CD4-positive, alpha-beta T cell (primary cell): ENCODE measurements at regions of chr5 and their contacts with region 1.

Region 1: DNA sequence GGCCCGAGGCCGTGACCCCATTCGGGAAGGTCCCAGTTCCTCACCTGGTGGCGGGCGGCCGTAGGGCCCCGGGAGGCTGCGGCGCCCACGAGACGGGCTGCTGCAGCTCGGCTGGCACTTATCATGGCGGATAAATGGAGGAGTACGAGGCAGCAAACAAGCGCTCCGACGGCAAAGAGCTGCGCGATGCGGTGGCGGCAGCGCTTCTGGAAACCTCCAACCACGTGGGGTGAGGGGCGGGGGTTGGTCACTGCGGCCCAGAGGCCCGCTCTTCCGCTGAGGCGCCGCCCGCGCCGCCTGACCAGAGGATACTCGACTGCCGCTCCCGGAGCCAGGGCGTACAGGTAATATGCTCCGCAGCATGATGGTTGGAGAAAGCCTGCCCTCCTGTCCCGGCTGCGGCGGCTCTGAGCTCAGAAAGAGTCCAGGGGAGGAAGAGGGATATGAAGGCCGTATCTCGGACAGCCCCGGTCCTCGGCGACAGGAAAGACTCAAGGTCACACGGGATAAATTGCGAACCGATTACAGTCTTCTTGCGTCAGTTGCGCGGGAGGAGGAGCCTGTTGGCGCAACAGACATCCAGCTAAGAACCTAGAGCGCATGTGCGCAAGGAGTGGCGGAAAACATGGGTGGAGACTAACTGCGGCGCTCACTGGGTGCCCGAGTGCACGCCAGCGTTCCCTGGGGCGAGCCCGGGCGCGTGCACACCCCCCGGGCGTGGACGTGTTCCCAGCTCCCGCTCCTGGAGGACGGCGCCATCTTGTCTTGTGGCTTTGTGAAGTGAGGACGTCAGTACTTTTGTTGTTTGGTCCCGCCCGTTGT is at the start of gene HSPA9:
- DNase-seq: peak; percentile 93 to 100 (median 96)
- ATAC-seq: peak; percentile 80
- H3K4me3 ChIP-seq: peak within 1 kb of the TSS; percentile 79
- H3K4me3 Mint-ChIP-seq: peak within 1 kb of the TSS; percentile 97
- H3K27ac ChIP-seq: peak within 1 kb of the TSS; percentile 98 to 99
- H3K27ac Mint-ChIP-seq: peak within 1 kb of the TSS; percentile 100
- H3K4me1 ChIP-seq: peaks cover 26% of the 10 kb centered on the region
- H3K4me1 Mint-ChIP-seq: peaks cover 50% of the 10 kb centered on the region
- H3K27me3 ChIP-seq: no peaks in the 10 kb centered on the region
- H3K27me3 Mint-ChIP-seq: no peaks in the 10 kb centered on the region
- CTCF ChIP-seq: no peak
- total RNA-seq, gene HSPA9: 354 to 366 TPM

Region 2: DNA sequence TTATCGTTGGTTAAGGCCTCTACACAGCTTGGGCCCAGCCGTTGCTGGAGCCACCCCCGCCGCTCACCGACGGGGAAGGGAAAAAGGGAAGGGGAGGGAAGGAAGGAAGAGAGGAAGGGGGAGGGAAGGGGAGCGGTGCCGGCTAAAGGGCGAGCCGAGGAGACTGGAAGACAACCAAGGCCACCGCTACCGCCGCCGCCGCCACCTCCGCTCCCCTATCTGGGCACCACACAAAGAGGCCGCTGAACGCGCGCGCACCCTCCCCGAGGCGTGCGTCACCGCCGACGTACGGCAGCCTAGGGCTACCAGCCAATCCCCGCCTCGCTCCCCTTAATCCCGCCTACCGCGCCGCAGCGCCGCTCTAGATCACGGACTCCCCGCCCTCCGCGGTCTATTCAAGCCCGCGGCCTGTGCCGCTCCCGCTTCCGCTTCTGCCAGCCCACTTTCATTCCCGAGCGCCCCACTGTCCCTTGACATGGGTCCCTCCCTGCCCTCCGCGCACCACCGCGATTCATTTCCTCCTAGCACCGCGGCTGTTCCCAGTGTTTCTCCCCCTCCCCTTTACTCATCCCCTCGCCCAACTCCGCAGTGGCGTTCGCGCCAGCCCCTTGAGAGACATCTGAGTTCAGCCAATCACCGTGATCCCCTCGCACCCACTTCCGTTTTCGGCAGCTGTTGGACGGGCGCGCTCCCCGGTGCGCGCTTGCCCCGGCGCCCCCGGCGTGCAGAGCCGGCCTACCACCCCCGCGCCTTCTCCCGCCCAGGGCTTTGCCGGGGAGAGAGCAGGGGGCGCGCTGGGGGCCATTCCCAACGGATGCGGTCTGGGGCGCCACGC is 821.1 kb before region 1 on chr5 and contains the start of gene HNRNPA0:
- CTCF ChIA-PET with region 1: no interaction called
- POLR2A ChIA-PET with region 1: interaction called, 8 read pairs
- intact Hi-C with region 1: loop called in 1 of 2 experiments (anchors 10 kb)
- DNase-seq: peak; percentile 95 to 99 (median 96)
- ATAC-seq: peak; percentile 81
- H3K4me3 ChIP-seq: peak within 1 kb of the TSS; percentile 97
- H3K4me3 Mint-ChIP-seq: peak within 1 kb of the TSS; percentile 97
- H3K27ac ChIP-seq: peak within 1 kb of the TSS; percentile 100
- H3K27ac Mint-ChIP-seq: peak within 1 kb of the TSS; percentile 100
- H3K4me1 ChIP-seq: peaks cover 28% of the 10 kb centered on the region
- H3K4me1 Mint-ChIP-seq: peaks cover 37% of the 10 kb centered on the region
- H3K27me3 ChIP-seq: no peaks in the 10 kb centered on the region
- H3K27me3 Mint-ChIP-seq: no peaks in the 10 kb centered on the region
- CTCF ChIP-seq: no peak
- total RNA-seq, gene HNRNPA0: 52.7 to 53.2 TPM

Region 3: DNA sequence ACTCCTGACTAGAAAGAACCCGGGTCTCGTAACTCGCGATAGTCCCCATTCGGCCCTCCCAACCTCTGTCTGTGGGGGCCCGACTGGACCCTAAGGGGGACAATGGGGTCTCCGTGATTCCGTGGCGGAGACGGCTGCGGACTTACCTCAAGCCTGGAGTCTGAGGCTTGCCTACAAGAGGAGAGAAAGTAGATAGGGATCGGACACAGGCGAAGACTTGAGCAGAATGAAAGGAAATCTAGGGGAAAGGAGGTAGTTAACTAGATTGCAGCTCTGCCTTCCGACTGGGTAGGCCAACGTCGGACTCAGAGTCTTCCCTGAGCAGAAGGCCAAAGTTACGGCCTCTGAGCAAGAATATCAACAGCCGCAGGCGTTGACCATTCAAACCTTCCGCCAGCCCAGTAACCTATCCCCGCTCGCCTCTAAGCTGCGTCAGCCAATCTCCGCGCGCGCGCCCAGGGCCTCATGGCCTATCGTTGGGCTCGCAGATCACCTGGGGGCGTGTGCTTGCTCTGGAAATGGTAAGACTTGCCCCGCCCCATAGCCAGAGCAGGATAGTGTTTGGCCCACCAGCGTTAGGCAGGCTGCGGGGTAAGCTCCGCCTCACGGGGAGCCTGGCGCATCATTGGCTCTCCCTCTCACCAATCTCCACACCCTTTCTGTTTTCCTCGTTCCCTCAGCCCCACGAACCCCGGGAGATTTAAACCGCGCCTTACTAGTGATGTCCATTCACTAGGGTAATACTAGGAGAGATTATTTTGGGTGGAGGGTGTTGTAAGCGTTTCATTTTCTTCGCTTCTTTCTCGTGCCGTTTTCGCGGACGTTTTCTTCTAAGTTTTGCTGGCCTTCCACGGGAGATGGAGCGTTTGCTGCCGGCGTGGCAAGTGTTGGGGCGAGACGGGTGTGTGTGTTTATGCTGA is 243.7 kb before region 1 on chr5 and contains the start of gene CDC25C:
- CTCF ChIA-PET with region 1: no interaction called
- POLR2A ChIA-PET with region 1: interaction called, 6 read pairs
- intact Hi-C with region 1: loop called in 1 of 2 experiments (anchors 10 kb)
- DNase-seq: peak; percentile 92 to 99 (median 95)
- ATAC-seq: peak; percentile 99
- H3K4me3 ChIP-seq: peak within 1 kb of the TSS; percentile 68
- H3K4me3 Mint-ChIP-seq: peak within 1 kb of the TSS; percentile 83
- H3K27ac ChIP-seq: no peak within 1 kb of the TSS
- H3K27ac Mint-ChIP-seq: peak within 1 kb of the TSS; percentile 40
- H3K4me1 ChIP-seq: peaks cover 13% of the 10 kb centered on the region
- H3K4me1 Mint-ChIP-seq: peaks cover 8% of the 10 kb centered on the region
- H3K27me3 ChIP-seq: no peaks in the 10 kb centered on the region
- H3K27me3 Mint-ChIP-seq: no peaks in the 10 kb centered on the region
- CTCF ChIP-seq: no peak
- total RNA-seq, gene CDC25C: not detected

Region 4: DNA sequence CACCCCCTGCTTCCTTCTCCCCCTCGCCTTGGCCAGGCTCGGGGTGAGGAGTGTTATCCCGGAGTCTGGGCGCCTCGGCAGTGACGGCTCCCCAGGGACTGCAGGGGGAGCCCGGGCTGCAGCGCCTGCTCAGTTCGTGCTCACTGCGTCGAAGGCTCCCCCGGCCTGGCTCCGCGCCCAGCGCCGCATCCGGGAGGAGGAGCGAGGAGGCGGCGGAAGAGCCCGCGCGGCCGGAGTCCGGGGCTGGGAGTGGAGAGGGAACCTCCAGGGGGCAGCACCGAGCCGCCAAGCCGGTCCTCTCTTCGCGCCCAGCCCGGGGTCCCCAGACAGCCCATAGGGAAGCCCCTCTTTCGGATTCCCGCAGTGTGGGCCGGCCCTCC is 111.4 kb before region 1 on chr5:
- CTCF ChIA-PET with region 1: interaction called, 5 read pairs
- POLR2A ChIA-PET with region 1: interaction called, 24 read pairs
- intact Hi-C with region 1: loop called in 1 of 2 experiments (anchors 10 kb)
- DNase-seq: peak; percentile 85 to 98 (median 93)
- ATAC-seq: peak; percentile 51
- H3K4me3 ChIP-seq: peak overlapping the region; percentile 60
- H3K4me3 Mint-ChIP-seq: peak overlapping the region; percentile 96
- H3K27ac ChIP-seq: peak overlapping the region; percentile 89 to 94
- H3K27ac Mint-ChIP-seq: peak overlapping the region; percentile 93
- H3K4me1 ChIP-seq: peaks cover 60% of the 10 kb centered on the region
- H3K4me1 Mint-ChIP-seq: peaks cover 50% of the 10 kb centered on the region
- H3K27me3 ChIP-seq: no peaks in the 10 kb centered on the region
- H3K27me3 Mint-ChIP-seq: no peaks in the 10 kb centered on the region
- CTCF ChIP-seq: peak; percentile 85

Region 5: GRCh38 chr5:138523406-138523970 is 51.9 kb before region 1 on chr5:
- CTCF ChIA-PET with region 1: no interaction called
- POLR2A ChIA-PET with region 1: no interaction called
- intact Hi-C with region 1: no loop called
- DNase-seq: no peak
- ATAC-seq: no peak
- H3K4me3 ChIP-seq: no peak overlapping the region
- H3K4me3 Mint-ChIP-seq: no peak overlapping the region
- H3K27ac ChIP-seq: no peak overlapping the region
- H3K27ac Mint-ChIP-seq: no peak overlapping the region
- H3K4me1 ChIP-seq: peaks cover 4% of the 10 kb centered on the region
- H3K4me1 Mint-ChIP-seq: peaks cover 35% of the 10 kb centered on the region
- H3K27me3 ChIP-seq: no peaks in the 10 kb centered on the region
- H3K27me3 Mint-ChIP-seq: no peaks in the 10 kb centered on the region
- CTCF ChIP-seq: no peak

Region 6: GRCh38 chr5:139262742-139263445 is 687.5 kb after region 1 on chr5:
- CTCF ChIA-PET with region 1: no interaction called
- POLR2A ChIA-PET with region 1: interaction called, 3 read pairs
- intact Hi-C with region 1: loop called (anchors 1 to 2 kb)
- DNase-seq: peak; percentile 36 to 83 (median 56)
- ATAC-seq: peak; percentile 100
- H3K4me3 ChIP-seq: no peak overlapping the region
- H3K4me3 Mint-ChIP-seq: no peak overlapping the region
- H3K27ac ChIP-seq: no peak overlapping the region
- H3K27ac Mint-ChIP-seq: no peak overlapping the region
- H3K4me1 ChIP-seq: peaks cover 8% of the 10 kb centered on the region
- H3K4me1 Mint-ChIP-seq: peaks cover 10% of the 10 kb centered on the region
- H3K27me3 ChIP-seq: peaks cover 0 to 5% of the 10 kb centered on the region in 2 experiments
- H3K27me3 Mint-ChIP-seq: peaks cover 4% of the 10 kb centered on the region
- CTCF ChIP-seq: peak; percentile 67

Region 7: GRCh38 chr5:139403787-139404483 is 828.5 kb after region 1 on chr5 and contains the start of gene SPATA24:
- CTCF ChIA-PET with region 1: no interaction called
- POLR2A ChIA-PET with region 1: no interaction called
- intact Hi-C with region 1: loop called in 1 of 2 experiments (anchors 10 kb)
- DNase-seq: peak; percentile 95 to 99 (median 98)
- ATAC-seq: peak; percentile 85
- H3K4me3 ChIP-seq: peak within 1 kb of the TSS; percentile 71
- H3K4me3 Mint-ChIP-seq: peak within 1 kb of the TSS; percentile 92
- H3K27ac ChIP-seq: peak within 1 kb of the TSS; percentile 74 to 97
- H3K27ac Mint-ChIP-seq: peak within 1 kb of the TSS; percentile 94
- H3K4me1 ChIP-seq: peaks cover 21% of the 10 kb centered on the region
- H3K4me1 Mint-ChIP-seq: peaks cover 35% of the 10 kb centered on the region
- H3K27me3 ChIP-seq: no peaks in the 10 kb centered on the region
- H3K27me3 Mint-ChIP-seq: no peaks in the 10 kb centered on the region
- CTCF ChIP-seq: no peak
- total RNA-seq, gene SPATA24: 3.0 to 3.9 TPM

Region 8: DNA sequence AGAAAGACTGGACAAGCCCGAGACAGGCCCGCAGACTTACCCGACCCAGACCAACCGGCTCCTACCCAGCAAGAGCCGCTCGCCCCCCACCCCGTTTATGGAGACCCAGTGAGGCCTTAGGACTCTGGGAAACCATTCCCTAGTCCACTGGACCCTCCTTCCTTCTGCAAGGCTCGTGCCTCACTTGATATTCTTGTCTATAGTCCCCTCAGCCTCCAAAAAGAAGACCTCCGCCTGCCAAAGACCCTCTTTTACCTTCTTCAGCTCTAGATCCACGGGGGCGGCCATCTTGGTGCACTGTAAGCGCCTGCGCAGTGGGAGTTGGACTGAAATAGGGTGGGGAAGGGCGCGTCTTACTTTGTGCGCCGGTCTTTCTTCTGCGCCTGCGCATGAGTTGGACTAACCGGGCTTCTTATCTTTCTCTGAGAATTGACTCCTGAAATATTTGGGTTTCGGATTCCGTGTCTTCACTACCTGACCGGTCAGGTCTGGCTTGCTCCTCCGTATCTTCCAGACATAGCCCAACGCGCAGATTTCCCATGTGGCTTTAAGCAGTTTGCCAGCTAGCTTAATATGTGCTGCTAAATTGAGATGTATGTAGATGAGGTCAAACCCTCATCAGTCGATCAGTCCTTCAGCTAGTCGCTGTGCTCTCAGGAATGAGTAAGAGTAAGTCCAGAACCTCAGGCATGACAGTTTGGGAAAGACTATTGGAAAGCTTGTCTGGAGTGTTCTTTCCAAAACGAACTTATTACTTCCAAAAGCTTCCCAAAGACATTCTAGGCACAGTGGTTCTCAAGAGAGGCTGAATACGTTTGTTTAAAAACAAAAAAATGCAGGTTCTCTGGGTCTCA is 1727.6 kb after region 1 on chr5 and contains the start of gene PFDN1:
- CTCF ChIA-PET with region 1: no interaction called
- POLR2A ChIA-PET with region 1: no interaction called
- intact Hi-C with region 1: loop called in 1 of 2 experiments (anchors 10 kb)
- DNase-seq: peak; percentile 79 to 97 (median 88)
- ATAC-seq: peak; percentile 99
- H3K4me3 ChIP-seq: peak within 1 kb of the TSS; percentile 73
- H3K4me3 Mint-ChIP-seq: peak within 1 kb of the TSS; percentile 97
- H3K27ac ChIP-seq: peak within 1 kb of the TSS; percentile 38 to 42
- H3K27ac Mint-ChIP-seq: peak within 1 kb of the TSS; percentile 92
- H3K4me1 ChIP-seq: peaks cover 14% of the 10 kb centered on the region
- H3K4me1 Mint-ChIP-seq: peaks cover 30% of the 10 kb centered on the region
- H3K27me3 ChIP-seq: no peaks in the 10 kb centered on the region
- H3K27me3 Mint-ChIP-seq: no peaks in the 10 kb centered on the region
- CTCF ChIP-seq: no peak
- total RNA-seq, gene PFDN1: 21.3 to 22.0 TPM